ENCODE measurements at regions of chr2 and their contacts with region 1.

Region 1: GRCh38 chr2:30165050-30165520 is 18.3 kb downstream of the YPEL5 start:
- DNase-seq: peak; percentile 32 to 90
- ATAC-seq: peak; percentile 54 to 89 (median 85)
- H3K4me3 ChIP-seq: no peak overlapping the region
- H3K4me3 Mint-ChIP-seq: peak overlapping the region; percentile 61
- H3K27ac ChIP-seq: no peak overlapping the region
- H3K27ac Mint-ChIP-seq: peak overlapping the region in 1 of 2 donors; percentile 70
- H3K4me1 ChIP-seq: no peaks in the 10 kb centered on the region
- H3K4me1 Mint-ChIP-seq: peaks cover 21 to 26% of the 10 kb centered on the region in 2 donors
- H3K27me3 ChIP-seq: no peaks in the 10 kb centered on the region
- H3K27me3 Mint-ChIP-seq: no peaks in the 10 kb centered on the region
- CTCF ChIP-seq: peak; percentile 80

Region 2: DNA sequence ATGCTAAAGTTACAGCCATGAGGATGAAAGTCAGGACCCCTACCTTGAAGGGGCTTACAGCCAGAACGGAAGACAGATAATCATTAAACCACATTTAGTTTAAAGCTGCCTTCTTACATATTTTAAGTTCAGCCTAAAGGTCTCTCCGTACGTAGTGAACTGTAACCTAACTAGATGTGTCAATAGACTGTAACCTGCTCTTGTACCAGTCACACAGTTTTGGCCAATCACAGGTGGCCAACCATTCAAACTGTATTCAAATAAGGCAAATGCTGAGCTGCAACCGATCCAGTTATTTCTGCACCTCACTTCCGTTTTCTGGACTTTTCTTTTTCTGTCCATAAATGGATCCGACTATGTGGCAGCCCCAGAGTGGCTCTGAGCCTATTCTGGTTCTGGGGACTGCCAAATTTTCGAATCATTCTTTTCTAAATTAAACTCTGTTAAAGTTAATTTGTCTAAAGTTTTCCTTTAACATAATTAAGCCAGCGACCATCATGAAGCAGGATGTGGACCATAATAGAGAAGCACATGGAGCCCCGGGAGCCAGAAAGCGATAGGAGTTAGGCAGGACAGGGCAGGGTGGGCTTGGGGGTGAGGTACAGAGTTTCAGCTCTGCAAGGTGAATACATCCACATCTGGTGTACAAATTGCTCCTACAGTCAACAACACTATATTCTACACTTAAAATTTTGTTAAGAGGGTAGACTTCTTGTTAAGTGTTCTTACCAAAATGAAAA is 66.6 kb before region 1 on chr2:
- intact Hi-C with region 1: loop called (anchors 5 kb)
- DNase-seq: no peak
- ATAC-seq: no peak
- H3K4me3 ChIP-seq: no peak overlapping the region
- H3K4me3 Mint-ChIP-seq: no peak overlapping the region
- H3K27ac ChIP-seq: no peak overlapping the region
- H3K27ac Mint-ChIP-seq: no peak overlapping the region
- H3K4me1 ChIP-seq: no peaks in the 10 kb centered on the region
- H3K4me1 Mint-ChIP-seq: no peaks in the 10 kb centered on the region
- H3K27me3 ChIP-seq: no peaks in the 10 kb centered on the region
- H3K27me3 Mint-ChIP-seq: peaks cover 35 to 53% of the 10 kb centered on the region in 2 donors
- CTCF ChIP-seq: no peak

Region 3: GRCh38 chr2:30273261-30273861 is 108.3 kb after region 1 on chr2:
- intact Hi-C with region 1: no loop called
- DNase-seq: no peak
- ATAC-seq: no peak
- H3K4me3 ChIP-seq: no peak overlapping the region
- H3K4me3 Mint-ChIP-seq: no peak overlapping the region
- H3K27ac ChIP-seq: no peak overlapping the region
- H3K27ac Mint-ChIP-seq: no peak overlapping the region
- H3K4me1 ChIP-seq: peaks cover 13% of the 10 kb centered on the region
- H3K4me1 Mint-ChIP-seq: peaks cover 30 to 32% of the 10 kb centered on the region in 2 donors
- H3K27me3 ChIP-seq: no peaks in the 10 kb centered on the region
- H3K27me3 Mint-ChIP-seq: no peaks in the 10 kb centered on the region
- CTCF ChIP-seq: no peak